ENCODE measurements at regions of chr15 and their contacts with region 1.

Region 1: DNA sequence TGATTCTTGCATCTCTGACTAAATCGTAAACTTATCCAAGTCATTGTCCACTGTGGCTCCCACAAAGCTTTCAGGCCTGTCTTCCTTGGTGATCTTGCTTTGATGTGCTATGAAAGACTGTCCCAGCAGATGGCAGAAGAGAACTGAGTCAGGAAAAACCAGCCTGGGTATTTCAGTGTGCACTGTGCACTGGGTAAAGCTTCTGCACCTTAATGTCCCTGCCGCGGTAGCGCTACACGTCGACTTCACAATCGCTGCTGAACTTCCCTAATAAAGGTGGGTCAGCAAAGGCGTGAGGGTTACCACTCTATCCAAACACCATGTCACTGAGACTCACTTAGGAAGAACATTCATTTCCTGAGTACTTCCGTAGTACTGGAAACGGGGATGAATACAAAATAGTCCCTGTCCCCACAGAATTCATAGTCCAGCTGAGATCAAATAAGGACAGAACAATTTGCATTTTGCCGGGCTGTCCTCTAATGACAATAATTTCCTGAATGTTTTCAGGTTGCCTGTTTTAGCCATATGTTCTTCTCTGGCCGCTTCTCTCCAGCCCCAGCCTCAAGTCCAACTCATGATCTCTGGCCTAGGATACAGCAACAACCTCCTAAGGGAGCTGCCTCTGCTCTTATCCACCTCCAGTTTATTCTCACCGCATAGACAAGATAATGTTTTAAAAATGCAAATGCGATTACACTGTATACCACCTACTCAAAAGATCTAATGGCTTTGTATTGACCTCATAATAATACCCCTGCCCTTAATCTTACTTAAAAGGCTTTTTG is 83.6 kb upstream of the AKAP13 start:
- DNase-seq: peak; percentile 84
- ATAC-seq: peak; percentile 100
- H3K4me3 Mint-ChIP-seq: peak overlapping the region; percentile 50
- H3K27ac Mint-ChIP-seq: peak overlapping the region; percentile 61
- H3K4me1 Mint-ChIP-seq: peaks cover 21% of the 10 kb centered on the region
- H3K27me3 Mint-ChIP-seq: peaks cover 1% of the 10 kb centered on the region

Region 2: DNA sequence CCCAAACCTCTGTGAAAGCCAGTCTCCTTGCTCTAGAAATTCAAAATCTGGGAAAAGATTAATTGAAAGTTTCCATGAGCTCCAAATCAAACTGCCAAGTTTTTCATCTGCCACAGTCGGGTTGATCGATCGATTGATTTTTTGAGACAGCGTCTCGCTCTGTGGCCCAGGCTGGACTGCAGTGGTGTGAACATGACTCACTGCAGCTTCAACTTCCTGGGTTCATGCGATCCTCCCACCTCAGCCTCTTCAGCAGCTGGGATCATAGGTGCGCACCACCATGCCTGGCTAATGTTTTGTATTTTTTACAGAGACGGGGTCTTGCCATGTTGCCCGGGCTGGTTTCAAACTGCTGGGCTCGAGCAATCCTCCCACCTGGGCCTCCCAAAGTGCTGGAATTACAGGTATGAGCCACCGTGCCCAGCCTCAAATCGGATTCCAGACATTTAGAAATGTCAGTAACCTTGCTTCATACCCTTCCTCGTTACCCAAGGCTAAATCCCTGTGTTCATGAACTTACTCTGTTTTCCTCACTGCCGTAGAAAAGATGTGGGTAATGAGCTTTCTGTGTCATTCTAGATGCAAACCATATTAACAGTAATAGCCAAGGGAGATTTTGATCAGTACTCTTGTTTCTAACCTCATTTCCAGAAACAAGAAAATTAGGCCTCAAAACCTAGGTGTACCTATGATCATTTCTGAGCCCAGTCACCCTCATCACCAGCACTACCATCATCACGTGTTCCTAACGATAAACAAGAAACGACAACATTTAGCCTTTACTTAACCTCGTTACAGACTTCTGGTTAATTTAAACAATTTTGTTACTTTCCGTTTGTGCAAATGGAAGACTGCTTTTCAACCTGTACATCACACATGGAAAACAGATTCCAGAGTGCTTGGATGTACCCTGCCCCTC is 22.2 kb before region 1 on chr15:
- CTCF ChIA-PET with region 1: no interaction called
- DNase-seq: no peak
- ATAC-seq: no peak
- H3K4me3 Mint-ChIP-seq: no peak overlapping the region
- H3K27ac Mint-ChIP-seq: no peak overlapping the region
- H3K4me1 Mint-ChIP-seq: peaks cover 4% of the 10 kb centered on the region
- H3K27me3 Mint-ChIP-seq: peaks cover 3% of the 10 kb centered on the region

Region 3: GRCh38 chr15:85312486-85312885 is 15.7 kb after region 1 on chr15:
- CTCF ChIA-PET with region 1: interaction called, 51 read pairs
- DNase-seq: peak; percentile 49
- ATAC-seq: peak; percentile 54
- H3K4me3 Mint-ChIP-seq: peak overlapping the region; percentile 34
- H3K27ac Mint-ChIP-seq: peak overlapping the region; percentile 65
- H3K4me1 Mint-ChIP-seq: peaks cover 63% of the 10 kb centered on the region
- H3K27me3 Mint-ChIP-seq: no peaks in the 10 kb centered on the region

Region 4: GRCh38 chr15:85318048-85318731 is 21.4 kb after region 1 on chr15:
- CTCF ChIA-PET with region 1: interaction called, 51 read pairs
- DNase-seq: peak; percentile 80
- ATAC-seq: peak; percentile 84
- H3K4me3 Mint-ChIP-seq: peak overlapping the region; percentile 34
- H3K27ac Mint-ChIP-seq: peak overlapping the region; percentile 87
- H3K4me1 Mint-ChIP-seq: peaks cover 53% of the 10 kb centered on the region
- H3K27me3 Mint-ChIP-seq: no peaks in the 10 kb centered on the region

Region 5: DNA sequence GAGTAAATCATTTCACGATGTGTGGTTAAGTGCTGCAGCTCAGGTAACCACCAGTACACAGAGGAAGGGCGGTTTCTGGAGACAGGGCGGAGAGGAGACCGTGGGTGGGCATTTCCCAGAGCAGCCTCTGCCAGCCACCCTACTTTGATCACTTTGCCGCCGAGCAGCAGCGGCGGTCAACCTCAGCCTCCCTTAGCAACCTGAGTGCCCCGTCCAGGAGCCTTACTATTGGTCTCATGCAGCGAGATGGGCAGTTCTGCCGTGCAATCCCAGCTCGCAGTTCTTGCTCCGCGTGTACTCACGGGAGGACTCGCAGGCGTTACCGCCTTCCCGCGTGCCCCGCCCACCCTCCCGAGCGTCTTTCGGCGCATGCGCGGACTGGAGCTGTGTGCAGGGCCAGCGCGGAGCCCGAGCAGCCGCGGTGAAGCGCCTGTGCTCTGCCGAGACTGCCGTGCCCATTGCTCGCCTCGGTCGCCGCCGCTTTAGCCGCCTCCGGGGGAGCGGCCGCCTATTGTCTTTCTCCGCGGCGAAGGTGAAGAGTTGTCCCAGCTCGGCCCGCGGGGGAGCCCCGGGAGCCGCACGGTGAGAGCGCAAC is 83.5 kb after region 1 on chr15 and contains the start of gene AKAP13:
- CTCF ChIA-PET with region 1: interaction called, 10 read pairs
- DNase-seq: peak; percentile 99
- ATAC-seq: peak; percentile 86
- H3K4me3 Mint-ChIP-seq: peak within 1 kb of the TSS; percentile 78
- H3K27ac Mint-ChIP-seq: peak within 1 kb of the TSS; percentile 94
- H3K4me1 Mint-ChIP-seq: peaks cover 64% of the 10 kb centered on the region
- H3K27me3 Mint-ChIP-seq: peaks cover 2% of the 10 kb centered on the region
- total RNA-seq, gene AKAP13: 150 to 172 TPM

Region 6: GRCh38 chr15:85504749-85505676 is 208.2 kb after region 1 on chr15:
- CTCF ChIA-PET with region 1: interaction called, 19 read pairs
- DNase-seq: peak; percentile 53
- ATAC-seq: no peak
- H3K4me3 Mint-ChIP-seq: no peak overlapping the region
- H3K27ac Mint-ChIP-seq: no peak overlapping the region
- H3K4me1 Mint-ChIP-seq: peaks cover 32% of the 10 kb centered on the region
- H3K27me3 Mint-ChIP-seq: no peaks in the 10 kb centered on the region

Region 7: GRCh38 chr15:85750319-85750806 is 453.6 kb after region 1 on chr15:
- CTCF ChIA-PET with region 1: no interaction called
- DNase-seq: no peak
- ATAC-seq: no peak
- H3K4me3 Mint-ChIP-seq: no peak overlapping the region
- H3K27ac Mint-ChIP-seq: no peak overlapping the region
- H3K4me1 Mint-ChIP-seq: peaks cover 14% of the 10 kb centered on the region
- H3K27me3 Mint-ChIP-seq: no peaks in the 10 kb centered on the region